ENCODE measurements at regions of chr4 and their contacts with region 1.

Region 1: GRCh38 chr4:154642373-154643009 is 30.0 kb upstream of the FGG start:
- DNase-seq: no peak
- H3K4me3 Mint-ChIP-seq: no peak overlapping the region
- H3K27ac Mint-ChIP-seq: no peak overlapping the region
- H3K4me1 Mint-ChIP-seq: no peaks in the 10 kb centered on the region
- H3K27me3 Mint-ChIP-seq: peaks cover 14% of the 10 kb centered on the region

Region 2: GRCh38 chr4:154399259-154399974 is 243.1 kb before region 1 on chr4:
- CTCF ChIA-PET with region 1: no interaction called
- intact Hi-C with region 1: no loop called
- DNase-seq: no peak
- H3K4me3 Mint-ChIP-seq: no peak overlapping the region
- H3K27ac Mint-ChIP-seq: no peak overlapping the region
- H3K4me1 Mint-ChIP-seq: no peaks in the 10 kb centered on the region
- H3K27me3 Mint-ChIP-seq: peaks cover 4% of the 10 kb centered on the region

Region 3: GRCh38 chr4:154779362-154779947 is 137.0 kb after region 1 on chr4:
- CTCF ChIA-PET with region 1: interaction called, 6 read pairs
- intact Hi-C with region 1: loop called (anchors 2 kb)
- DNase-seq: no peak
- H3K4me3 Mint-ChIP-seq: no peak overlapping the region
- H3K27ac Mint-ChIP-seq: no peak overlapping the region
- H3K4me1 Mint-ChIP-seq: no peaks in the 10 kb centered on the region
- H3K27me3 Mint-ChIP-seq: peaks cover 26% of the 10 kb centered on the region

Region 4: GRCh38 chr4:155007660-155008176 is 365.2 kb after region 1 on chr4:
- CTCF ChIA-PET with region 1: no interaction called
- intact Hi-C with region 1: no loop called
- DNase-seq: no peak
- H3K4me3 Mint-ChIP-seq: no peak overlapping the region
- H3K27ac Mint-ChIP-seq: no peak overlapping the region
- H3K4me1 Mint-ChIP-seq: no peaks in the 10 kb centered on the region
- H3K27me3 Mint-ChIP-seq: no peaks in the 10 kb centered on the region

Measured in activated naive CD4-positive, alpha-beta T cell treated with anti-CD3 and anti-CD28 coated beads for 36 hours (primary cell).